ENCODE measurements at regions of chr2 and their contacts with region 1.

Region 1: DNA sequence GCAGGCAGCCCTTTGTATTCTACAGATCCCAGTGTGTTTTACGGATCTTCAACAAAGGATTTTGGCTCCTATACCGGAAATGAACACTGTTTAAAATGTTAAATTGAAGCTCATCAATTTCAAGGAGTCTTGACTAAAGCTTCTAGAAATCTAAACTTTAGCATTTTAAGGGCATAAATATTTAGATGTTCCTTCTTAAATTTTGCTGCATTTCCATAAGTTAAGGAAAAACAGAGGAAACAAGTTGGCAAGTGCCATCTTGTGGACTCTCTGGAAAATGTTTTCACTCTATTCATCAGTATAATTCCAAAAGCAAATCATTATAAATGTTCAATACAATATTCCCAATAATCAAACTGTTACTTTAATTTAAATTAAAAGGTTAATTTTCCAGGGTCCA is 19.6 kb downstream of the CHN1 start:
- DNase-seq: no peak
- CTCF ChIP-seq: no peak

Region 2: DNA sequence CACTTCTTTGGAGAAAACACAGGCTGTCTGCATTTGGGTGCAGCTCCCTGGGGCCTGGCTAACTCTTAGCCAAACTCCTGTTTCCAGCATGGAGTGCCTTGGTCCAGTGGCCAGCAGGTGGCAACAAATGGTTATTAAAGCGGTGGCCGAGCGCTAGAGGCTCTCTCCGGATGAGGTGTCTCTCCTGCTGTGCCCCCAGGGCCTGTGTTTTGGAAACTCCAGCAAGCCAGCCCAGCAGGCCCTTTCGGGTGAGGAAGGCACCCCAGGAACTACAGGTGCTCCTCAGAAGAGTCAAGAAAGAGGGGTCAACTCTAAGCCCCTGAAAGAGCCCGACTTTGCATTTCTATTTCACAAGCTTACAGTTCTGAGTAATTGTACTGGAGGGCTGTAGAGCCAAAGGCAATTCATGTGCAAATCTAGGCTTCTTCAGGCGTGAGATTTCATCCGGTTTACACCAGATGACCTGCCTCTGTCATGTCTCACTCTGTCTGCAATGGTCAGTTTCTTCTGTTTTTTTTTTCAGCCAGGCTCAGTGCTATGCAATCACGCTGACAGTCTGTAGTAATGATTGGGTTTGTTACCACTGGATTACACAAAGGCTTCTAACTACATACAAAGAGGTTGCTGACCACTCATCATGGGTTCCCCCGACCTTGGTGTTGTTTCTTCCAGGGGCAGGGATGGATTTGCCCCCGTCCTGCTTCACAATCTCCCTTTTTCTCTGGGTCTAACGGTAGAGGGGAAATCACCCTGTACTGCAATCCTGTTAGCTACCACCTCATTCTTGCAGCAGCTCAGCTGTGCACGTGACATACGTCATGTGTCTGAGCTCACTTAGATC is 213.8 kb before region 1 on chr2:
- in situ Hi-C with region 1: loop called (anchors 25 kb)
- DNase-seq: peak; percentile 72
- CTCF ChIP-seq: peak; percentile 72

Region 3: DNA sequence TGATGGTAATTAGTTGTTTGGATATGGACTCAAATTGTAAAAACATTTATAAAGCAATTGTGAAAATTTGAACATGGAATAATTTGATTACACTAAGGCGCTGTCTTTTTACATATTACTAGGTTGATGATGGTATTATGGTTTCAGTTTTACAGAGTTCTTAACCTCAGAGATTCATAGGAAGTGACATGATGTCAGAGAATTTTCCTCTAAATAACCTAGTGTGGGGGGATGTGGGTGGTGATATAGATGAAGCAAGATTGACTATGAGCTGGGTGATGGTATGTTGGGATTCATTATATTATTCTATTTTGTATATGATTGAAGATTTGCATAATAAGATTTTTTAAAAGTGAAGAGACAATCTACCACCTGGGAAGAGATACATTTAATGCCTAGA is 241.8 kb after region 1 on chr2:
- in situ Hi-C with region 1: no loop called
- DNase-seq: no peak
- CTCF ChIP-seq: no peak